Ascending aorta (tissue), 2 donors: ENCODE measurements at regions of chr20 and their contacts with region 1.

Region 1: DNA sequence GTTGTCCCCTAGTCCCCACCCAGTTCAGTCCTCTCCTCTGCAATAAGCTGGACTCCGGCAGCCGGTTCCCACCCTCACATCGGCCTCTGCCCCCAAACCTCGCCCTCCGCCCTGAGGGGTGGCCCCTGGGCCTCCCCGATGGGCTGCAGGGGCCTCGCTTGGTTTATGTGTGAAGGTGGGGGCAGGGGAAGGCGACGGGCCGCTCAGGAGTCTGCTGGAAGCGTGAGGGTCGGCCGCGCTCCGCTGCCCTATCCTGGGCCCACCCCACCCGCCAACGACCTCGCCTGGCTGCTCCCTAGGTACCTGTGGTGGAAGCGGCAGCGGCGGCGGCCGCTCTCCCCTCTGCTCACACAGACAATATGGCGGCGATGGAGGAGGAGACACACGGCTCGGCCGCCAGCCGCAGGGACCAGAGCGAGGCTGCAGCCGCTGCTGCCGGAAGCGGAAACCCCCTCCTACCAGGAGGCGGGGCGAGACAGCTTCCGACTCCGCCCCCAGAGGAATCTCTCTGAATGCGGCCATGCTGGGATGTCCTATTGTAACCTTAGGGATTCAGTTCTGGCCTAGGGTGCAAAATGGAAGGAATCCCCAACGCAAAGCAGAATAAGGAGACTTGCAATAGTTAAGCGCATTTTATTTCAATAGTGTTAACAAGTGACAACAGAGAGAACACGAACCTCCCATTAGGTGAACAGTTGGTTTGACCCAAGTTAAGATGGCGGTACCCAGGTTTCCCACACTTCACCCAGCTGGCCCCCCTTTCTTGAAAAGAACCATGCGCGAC is at the start of gene CSNK2A1:
- DNase-seq: peak; percentile 73 to 96
- H3K4me3 ChIP-seq: peak within 1 kb of the TSS; percentile 78 to 93
- H3K27ac ChIP-seq: peak within 1 kb of the TSS; percentile 84 to 89
- H3K4me1 ChIP-seq: peaks cover 5 to 25% of the 10 kb centered on the region in 2 donors
- H3K27me3 ChIP-seq: no peaks in the 10 kb centered on the region
- CTCF ChIP-seq: no peak
- total RNA-seq, gene CSNK2A1: 74.1 TPM

Region 2: DNA sequence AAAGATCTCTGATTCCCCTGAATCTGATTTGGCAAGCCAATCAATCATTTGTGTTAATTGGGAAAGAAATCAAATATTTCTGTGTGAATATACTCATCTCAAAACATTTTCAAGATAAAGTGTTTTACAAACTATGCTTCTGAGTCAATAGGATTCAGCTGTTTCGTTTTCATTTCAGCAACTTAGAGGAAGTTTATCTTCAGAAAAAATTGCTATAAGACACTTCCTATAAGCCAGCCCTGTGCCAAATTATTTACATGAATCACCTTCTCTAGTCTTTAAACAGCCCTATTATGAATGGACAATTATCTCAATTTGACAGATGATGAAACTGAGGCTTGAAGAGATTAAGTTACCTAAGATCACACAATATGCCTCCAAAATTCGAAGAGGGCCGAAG is 305.6 kb before region 1 on chr20:
- intact Hi-C with region 1: no loop called
- DNase-seq: no peak
- H3K4me3 ChIP-seq: no peak overlapping the region
- H3K27ac ChIP-seq: no peak overlapping the region
- H3K4me1 ChIP-seq: no peaks in the 10 kb centered on the region
- H3K27me3 ChIP-seq: no peaks in the 10 kb centered on the region
- CTCF ChIP-seq: no peak

Region 3: GRCh38 chr20:309841-310644 is 233.5 kb before region 1 on chr20:
- intact Hi-C with region 1: loop called (anchors 5 kb)
- DNase-seq: peak; percentile 97 to 99
- H3K4me3 ChIP-seq: peak overlapping the region; percentile 50 to 66
- H3K27ac ChIP-seq: peak overlapping the region; percentile 89 to 95
- H3K4me1 ChIP-seq: no peaks in the 10 kb centered on the region
- H3K27me3 ChIP-seq: no peaks in the 10 kb centered on the region
- CTCF ChIP-seq: no peak

Region 4: GRCh38 chr20:347640-348484 is 195.7 kb before region 1 on chr20:
- intact Hi-C with region 1: loop called (anchors 5 kb)
- DNase-seq: peak; percentile 55 to 93
- H3K4me3 ChIP-seq: peak overlapping the region; percentile 67 to 83
- H3K27ac ChIP-seq: peak overlapping the region; percentile 84 to 90
- H3K4me1 ChIP-seq: peaks cover 0 to 6% of the 10 kb centered on the region in 2 donors
- H3K27me3 ChIP-seq: no peaks in the 10 kb centered on the region
- CTCF ChIP-seq: no peak

Region 5: GRCh38 chr20:462199-462991 is 81.2 kb before region 1 on chr20 and contains the start of gene TBC1D20:
- intact Hi-C with region 1: loop called (anchors 5 kb)
- DNase-seq: peak; percentile 24 to 86
- H3K4me3 ChIP-seq: peak within 1 kb of the TSS; percentile 84 to 96
- H3K27ac ChIP-seq: peak within 1 kb of the TSS; percentile 87 to 96
- H3K4me1 ChIP-seq: peaks cover 0 to 16% of the 10 kb centered on the region in 2 donors
- H3K27me3 ChIP-seq: no peaks in the 10 kb centered on the region
- CTCF ChIP-seq: peak in 2 of 3 experiments; percentile 27 to 30
- total RNA-seq, gene TBC1D20: 32.5 TPM

Region 6: GRCh38 chr20:833450-834150 is 290.0 kb after region 1 on chr20 and contains the start of gene FAM110A:
- intact Hi-C with region 1: loop called (anchors 1 kb)
- DNase-seq: peak; percentile 87 to 97
- H3K4me3 ChIP-seq: peak within 1 kb of the TSS; percentile 90
- H3K27ac ChIP-seq: peak within 1 kb of the TSS; percentile 72 to 78
- H3K4me1 ChIP-seq: peaks cover 4 to 17% of the 10 kb centered on the region in 2 donors
- H3K27me3 ChIP-seq: no peaks in the 10 kb centered on the region
- CTCF ChIP-seq: no peak
- total RNA-seq, gene FAM110A: 9.7 TPM

Region 7: GRCh38 chr20:1325173-1326030 is 781.8 kb after region 1 on chr20:
- intact Hi-C with region 1: loop called (anchors 10 kb)
- DNase-seq: peak; percentile 90 to 99
- H3K4me3 ChIP-seq: peak overlapping the region; percentile 88
- H3K27ac ChIP-seq: peak overlapping the region; percentile 98 to 99
- H3K4me1 ChIP-seq: peaks cover 0 to 33% of the 10 kb centered on the region in 2 donors
- H3K27me3 ChIP-seq: no peaks in the 10 kb centered on the region
- CTCF ChIP-seq: peak in 2 of 3 experiments; percentile 24 to 30